Activated CD4-positive, alpha-beta memory T cell treated with anti-CD3 and anti-CD28 coated beads, Interleukin-2, amount 10 ng/mL, durations not matched to agents 7 days and 5 days (primary cell): ENCODE measurements at regions of chr16 and their contacts with region 1.

Region 1: DNA sequence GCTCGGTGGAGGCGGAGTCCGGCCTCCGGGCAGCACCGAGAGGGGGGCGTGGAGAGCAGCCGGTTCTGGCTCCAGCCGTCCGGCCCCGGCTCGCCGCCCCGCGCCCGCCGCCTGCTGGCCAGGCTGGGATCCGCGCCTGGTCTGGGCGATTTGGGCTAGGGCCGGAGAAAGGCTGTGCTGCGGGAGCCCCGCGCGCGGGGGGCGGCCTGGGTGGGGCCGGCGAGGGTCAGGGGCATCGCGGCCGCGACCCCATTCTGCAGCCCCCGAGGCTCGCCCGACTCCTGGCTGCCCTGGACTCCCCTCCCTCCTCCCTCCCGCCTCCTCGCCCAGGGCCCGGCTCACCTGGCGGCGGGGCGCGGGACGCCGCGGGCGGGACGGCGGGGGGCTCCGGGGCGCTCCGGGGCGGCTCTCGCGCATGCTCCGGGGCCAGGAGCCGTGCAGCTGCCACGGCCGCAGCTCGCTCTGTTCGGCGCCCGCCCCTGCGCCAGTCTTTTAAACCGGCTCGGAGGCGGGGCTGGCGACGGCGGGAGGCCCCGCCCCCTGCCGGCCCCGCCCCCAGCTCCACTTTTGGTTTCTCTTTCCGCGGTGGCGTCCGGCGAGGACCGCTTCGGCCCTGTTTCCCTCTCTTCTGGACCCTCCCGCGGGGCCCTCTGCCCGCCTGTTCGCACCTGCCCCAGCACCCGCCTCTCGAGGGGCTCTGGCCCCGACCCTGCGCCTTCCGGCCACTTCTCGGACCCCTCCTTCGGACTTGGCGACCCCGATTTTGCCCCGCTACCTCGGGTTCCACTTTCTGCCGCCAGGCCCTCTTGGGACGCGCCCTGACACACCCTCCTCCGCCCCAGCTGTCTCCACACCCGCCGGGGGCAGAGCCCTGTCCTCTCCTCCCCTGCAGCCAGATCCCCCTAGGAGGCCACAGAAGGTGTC is at the start of gene SOCS1:
- DNase-seq: peak; percentile 92
- H3K4me3 Mint-ChIP-seq: peak within 1 kb of the TSS; percentile 94
- H3K27ac Mint-ChIP-seq: peak within 1 kb of the TSS; percentile 94
- H3K4me1 Mint-ChIP-seq: peaks cover 51% of the 10 kb centered on the region
- H3K27me3 Mint-ChIP-seq: peaks cover 12% of the 10 kb centered on the region
- total RNA-seq, gene SOCS1: 136 to 142 TPM

Region 2: DNA sequence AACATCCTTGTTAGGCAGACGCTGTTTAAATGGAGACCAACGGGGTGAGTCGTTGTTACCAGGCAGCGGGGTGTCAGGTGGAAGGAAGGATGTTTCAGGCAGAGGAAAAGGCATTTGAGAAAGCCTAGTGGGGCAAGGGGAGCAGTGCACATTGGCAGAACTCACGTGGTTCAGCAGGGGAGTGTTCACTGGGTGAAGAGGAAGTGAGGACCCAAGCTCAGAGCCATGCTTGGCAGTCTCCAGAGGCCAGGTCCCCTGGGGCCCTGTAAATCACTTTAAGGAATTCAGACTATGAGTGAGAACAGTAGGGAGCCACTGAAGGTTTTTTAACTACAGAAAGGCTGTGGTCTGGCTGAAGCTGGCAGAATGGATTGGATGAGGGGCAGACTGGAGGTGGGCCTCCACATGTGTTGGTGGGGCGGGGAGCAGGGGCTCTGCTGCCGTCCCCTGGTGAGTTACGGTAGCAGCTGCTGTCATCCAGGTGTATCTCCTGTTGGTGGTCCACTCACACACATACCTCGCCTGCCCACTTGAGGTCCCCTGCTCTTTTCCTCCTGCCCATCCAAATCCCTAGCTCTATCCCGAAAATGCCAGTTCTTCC is 306.5 kb before region 1 on chr16:
- CTCF ChIA-PET with region 1: interaction called, 15 read pairs
- POLR2A ChIA-PET with region 1: interaction called, 13 read pairs
- DNase-seq: peak; percentile 66
- H3K4me3 Mint-ChIP-seq: no peak overlapping the region
- H3K27ac Mint-ChIP-seq: peak overlapping the region; percentile 16
- H3K4me1 Mint-ChIP-seq: peaks cover 62% of the 10 kb centered on the region
- H3K27me3 Mint-ChIP-seq: no peaks in the 10 kb centered on the region

Region 3: DNA sequence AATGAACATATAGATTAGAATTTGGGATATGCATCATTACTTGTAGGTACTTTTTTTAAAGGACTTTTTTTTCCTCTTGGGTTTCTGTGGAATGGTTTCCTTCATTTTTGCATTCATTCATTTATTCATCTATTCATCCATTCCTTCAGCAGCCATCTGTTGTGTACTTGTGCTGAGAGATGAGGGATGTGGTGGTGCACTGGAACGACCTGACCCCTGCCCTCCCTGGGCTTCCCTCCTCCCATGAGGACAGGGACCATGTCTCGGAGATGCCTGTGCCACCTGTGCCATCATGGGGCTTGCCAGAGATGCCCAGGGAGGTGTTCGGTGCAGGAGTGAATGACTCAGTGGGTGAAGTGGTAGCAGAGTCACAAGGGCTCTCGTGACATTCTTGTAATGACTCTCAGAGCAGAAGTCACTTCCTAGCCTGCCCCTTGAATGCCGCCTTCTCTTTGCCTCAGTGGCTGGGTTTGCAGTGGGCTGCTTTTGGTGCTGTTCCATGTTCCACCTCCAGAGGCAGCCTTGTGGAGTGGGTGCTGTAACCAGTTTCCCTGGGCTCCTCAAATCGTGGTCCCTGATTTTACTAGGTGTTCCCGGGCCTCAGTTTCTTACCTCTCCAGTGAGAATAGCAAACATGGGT is 267.7 kb before region 1 on chr16:
- CTCF ChIA-PET with region 1: interaction called, 50 read pairs
- POLR2A ChIA-PET with region 1: interaction called, 67 read pairs
- DNase-seq: peak; percentile 85
- H3K4me3 Mint-ChIP-seq: peak overlapping the region; percentile 43
- H3K27ac Mint-ChIP-seq: peak overlapping the region; percentile 85
- H3K4me1 Mint-ChIP-seq: peaks cover 90% of the 10 kb centered on the region
- H3K27me3 Mint-ChIP-seq: no peaks in the 10 kb centered on the region

Region 4: GRCh38 chr16:11094072-11094856 is 161.7 kb before region 1 on chr16:
- CTCF ChIA-PET with region 1: interaction called, 7 read pairs
- POLR2A ChIA-PET with region 1: interaction called, 46 read pairs
- DNase-seq: peak; percentile 72
- H3K4me3 Mint-ChIP-seq: peak overlapping the region; percentile 36
- H3K27ac Mint-ChIP-seq: peak overlapping the region; percentile 93
- H3K4me1 Mint-ChIP-seq: peaks cover 86% of the 10 kb centered on the region
- H3K27me3 Mint-ChIP-seq: no peaks in the 10 kb centered on the region

Region 5: DNA sequence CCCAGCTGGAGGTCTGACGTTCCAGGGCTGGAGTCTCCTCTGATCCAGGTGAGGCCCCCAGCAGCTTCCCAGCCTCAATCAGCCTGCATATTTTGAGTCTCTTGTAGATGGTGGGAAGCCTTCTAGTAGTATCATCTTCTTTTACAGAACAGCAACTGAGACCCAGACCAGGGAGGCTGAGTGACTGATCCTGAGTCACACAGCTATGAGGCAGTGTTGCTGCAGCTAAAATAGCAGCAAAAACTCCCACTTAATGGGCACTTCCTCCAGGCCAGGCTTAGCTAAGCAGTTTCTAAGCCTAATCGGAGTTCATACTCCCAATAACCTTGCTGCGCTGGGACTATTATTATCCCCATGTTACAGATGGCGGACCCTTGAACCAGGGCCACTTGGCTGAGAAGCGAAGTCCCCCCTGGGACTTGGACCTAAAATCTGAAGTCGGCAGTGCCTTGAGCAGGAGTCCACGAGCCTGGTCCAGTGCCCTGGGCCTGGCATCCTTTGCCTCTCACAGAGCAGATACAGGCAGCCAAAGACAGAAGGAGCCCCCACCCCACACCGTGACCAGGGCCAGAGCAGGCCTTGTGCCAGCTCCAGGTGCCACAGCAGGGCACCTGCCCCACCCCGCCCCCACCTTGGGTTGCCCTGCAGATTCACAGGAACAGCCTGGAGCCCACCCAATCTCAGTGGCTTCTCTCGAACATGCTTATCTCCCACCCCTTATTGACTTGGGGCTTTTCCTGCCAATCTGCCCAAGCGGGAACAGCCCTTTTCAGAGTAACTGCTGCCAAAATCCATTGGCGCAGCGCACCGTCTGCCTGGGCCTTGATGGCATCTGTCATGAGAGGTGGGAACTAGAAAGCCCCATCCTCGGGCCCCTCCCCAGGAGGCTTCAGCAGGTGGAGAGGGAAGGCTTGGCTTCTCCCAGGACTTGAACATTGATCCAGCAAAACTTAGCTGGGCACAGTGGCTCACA is 65.1 kb before region 1 on chr16:
- CTCF ChIA-PET with region 1: interaction called, 3 read pairs
- POLR2A ChIA-PET with region 1: interaction called, 16 read pairs
- DNase-seq: no peak
- H3K4me3 Mint-ChIP-seq: no peak overlapping the region
- H3K27ac Mint-ChIP-seq: no peak overlapping the region
- H3K4me1 Mint-ChIP-seq: peaks cover 51% of the 10 kb centered on the region
- H3K27me3 Mint-ChIP-seq: no peaks in the 10 kb centered on the region

Region 6: DNA sequence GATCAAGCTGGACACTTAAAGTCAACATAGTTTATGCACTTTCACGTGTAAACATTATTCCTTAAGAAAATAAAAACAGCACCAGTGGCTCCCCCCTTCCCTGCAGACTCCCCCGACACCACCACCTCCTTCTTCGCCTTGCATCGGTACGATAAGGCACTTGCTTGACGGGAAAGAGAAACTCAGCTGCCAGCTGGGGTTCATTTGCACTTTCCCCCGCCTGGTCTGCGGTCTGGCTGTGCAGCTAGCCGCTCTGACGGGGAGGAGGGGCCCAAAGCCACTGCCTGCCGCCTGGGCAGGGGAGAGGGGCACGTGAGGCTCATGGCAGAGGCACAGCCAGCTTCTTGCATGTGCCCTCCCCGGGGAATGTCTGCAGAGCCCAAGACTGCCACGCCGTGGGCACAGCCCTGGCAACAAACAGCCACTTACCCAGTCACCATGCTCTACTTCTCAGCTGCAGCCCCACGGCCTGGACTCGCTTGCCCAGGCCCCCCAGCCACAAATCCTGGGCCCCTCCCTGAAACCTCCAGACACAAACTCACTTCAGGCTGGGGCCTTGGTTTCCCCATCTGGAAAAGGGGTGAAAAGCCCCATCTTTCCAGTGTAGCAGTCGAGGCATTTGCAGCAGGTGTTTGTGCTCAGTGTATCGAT is 41.6 kb after region 1 on chr16:
- CTCF ChIA-PET with region 1: interaction called, 7 read pairs
- POLR2A ChIA-PET with region 1: interaction called, 11 read pairs
- DNase-seq: peak; percentile 79
- H3K4me3 Mint-ChIP-seq: peak overlapping the region; percentile 4
- H3K27ac Mint-ChIP-seq: no peak overlapping the region
- H3K4me1 Mint-ChIP-seq: peaks cover 18% of the 10 kb centered on the region
- H3K27me3 Mint-ChIP-seq: peaks cover 38% of the 10 kb centered on the region

Region 7: DNA sequence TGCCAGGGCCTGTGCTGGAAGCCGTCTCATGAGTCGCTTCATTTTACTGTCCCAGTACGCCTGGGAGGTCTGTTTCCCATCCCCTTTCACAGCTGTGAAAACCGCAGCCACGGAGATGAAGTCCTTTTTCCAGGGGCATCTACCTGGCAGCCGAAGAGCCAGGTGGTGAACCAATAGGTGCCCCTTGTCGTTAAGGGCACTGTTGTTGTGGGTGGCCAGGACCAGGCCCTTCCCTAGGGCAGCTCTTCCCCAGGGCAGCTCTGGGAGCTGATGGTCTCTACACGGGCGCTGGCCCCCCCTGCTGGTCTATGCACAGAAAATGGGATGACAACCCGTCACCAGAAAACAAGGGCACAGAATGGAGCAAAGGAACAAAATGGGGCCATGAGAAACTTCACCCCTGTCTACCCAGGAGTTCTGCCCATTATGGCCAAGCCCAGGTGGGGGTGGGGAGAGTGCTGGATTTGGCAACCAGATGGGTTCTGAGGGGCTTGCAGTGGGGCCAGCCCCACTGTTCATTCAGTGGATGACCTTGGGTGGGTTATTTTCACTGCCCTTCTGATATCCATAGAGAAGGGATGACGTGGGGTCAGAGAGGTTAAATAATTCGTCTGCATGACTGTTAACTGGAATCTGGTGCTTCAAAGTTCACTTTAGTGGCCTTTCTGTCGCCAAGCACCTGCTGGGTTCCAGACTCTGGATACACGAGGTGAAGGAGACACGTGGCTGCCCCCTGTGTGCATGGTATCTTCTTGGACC is 100.8 kb after region 1 on chr16:
- CTCF ChIA-PET with region 1: interaction called, 44 read pairs
- POLR2A ChIA-PET with region 1: interaction called, 169 read pairs
- DNase-seq: peak; percentile 63
- H3K4me3 Mint-ChIP-seq: no peak overlapping the region
- H3K27ac Mint-ChIP-seq: no peak overlapping the region
- H3K4me1 Mint-ChIP-seq: peaks cover 60% of the 10 kb centered on the region
- H3K27me3 Mint-ChIP-seq: peaks cover 56% of the 10 kb centered on the region